Left ventricle myocardium inferior (tissue), 1 donor: ENCODE measurements at regions of chr1 and their contacts with region 1.

Region 1: DNA sequence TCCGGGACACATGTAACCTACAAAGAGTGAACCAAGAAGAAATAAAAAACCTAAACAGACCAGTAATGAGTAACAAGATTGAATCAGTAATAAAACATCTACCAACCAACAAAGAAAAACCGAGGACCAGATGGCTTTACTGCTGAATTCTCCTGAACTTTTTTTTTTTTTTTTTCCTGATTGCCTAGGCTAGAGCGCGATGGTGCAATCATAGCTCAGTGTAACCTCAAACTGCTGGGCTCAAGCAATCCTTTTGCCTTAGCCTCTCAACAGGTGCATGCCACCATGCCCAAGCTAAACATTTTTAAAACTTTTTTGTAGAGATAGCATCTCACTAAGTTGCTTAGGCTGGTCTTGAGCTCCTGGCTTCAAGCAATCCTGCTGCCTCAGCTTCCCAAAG is 11.2 kb upstream of the FGGY start:
- DNase-seq: no peak
- H3K4me3 ChIP-seq: no peak overlapping the region
- H3K27ac ChIP-seq: no peak overlapping the region
- H3K4me1 ChIP-seq: peaks cover 9% of the 10 kb centered on the region
- H3K27me3 ChIP-seq: no peaks in the 10 kb centered on the region
- CTCF ChIP-seq: no peak

Region 2: GRCh38 chr1:59198564-59198963 is 87.1 kb before region 1 on chr1:
- intact Hi-C with region 1: loop called (anchors 10 kb)
- DNase-seq: no peak
- H3K4me3 ChIP-seq: no peak overlapping the region
- H3K27ac ChIP-seq: no peak overlapping the region
- H3K4me1 ChIP-seq: peaks cover 12% of the 10 kb centered on the region
- H3K27me3 ChIP-seq: no peaks in the 10 kb centered on the region
- CTCF ChIP-seq: no peak